ENCODE measurements at regions of chr9 and their contacts with region 1.

Region 1: DNA sequence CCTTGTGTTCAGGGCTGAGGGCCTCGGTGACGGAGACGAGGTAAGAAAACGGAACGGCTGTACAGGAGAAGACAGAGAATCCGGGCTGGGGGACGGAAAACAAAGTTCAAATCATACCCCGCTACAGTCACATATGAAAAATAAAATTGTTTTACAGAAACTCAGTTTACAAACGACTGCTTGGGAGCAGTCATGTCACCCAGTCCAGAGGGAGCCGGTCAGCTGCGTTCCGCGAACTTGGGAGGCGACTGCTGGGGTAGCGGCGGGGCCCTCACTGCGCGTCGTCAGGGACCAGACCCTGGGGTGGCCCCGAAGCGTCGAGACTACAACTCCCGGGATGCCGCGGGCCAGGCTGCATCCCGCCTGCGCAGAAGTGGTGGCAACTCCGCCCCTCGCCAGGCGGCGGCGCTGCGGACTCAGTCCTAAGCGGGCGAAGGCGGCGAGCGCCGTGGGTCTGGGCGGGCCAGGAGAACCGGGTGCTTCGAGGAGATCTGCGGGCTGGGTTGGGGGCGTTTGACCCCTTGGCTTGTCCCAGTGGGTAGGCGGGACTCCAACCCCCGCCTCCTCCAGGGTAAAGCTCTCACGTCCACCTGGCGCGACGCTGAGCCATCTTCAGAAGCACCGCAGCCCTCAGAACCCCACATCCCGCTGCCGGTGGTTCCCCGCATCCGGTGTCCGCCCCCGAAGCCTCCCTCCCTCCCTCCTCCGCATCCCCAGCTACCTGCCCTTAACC is 4.0 kb downstream of the SIT1 start:
- DNase-seq: peak; percentile 89 to 91 (median 90)
- H3K4me3 ChIP-seq: peak overlapping the region; percentile 65 to 81 (median 71)
- H3K4me3 Mint-ChIP-seq: peak overlapping the region; percentile 92 to 99
- H3K27ac ChIP-seq: peak overlapping the region; percentile 89 to 94
- H3K27ac Mint-ChIP-seq: peak overlapping the region; percentile 94 to 99 (median 98)
- H3K4me1 ChIP-seq: peaks cover 57 to 78% of the 10 kb centered on the region in 2 donors
- H3K4me1 Mint-ChIP-seq: peaks cover 71% of the 10 kb centered on the region
- H3K27me3 ChIP-seq: no peaks in the 10 kb centered on the region
- H3K27me3 Mint-ChIP-seq: peaks cover 0 to 8% (median 0%) of the 10 kb centered on the region in 3 donors
- CTCF ChIP-seq: peak; percentile 97

Region 2: DNA sequence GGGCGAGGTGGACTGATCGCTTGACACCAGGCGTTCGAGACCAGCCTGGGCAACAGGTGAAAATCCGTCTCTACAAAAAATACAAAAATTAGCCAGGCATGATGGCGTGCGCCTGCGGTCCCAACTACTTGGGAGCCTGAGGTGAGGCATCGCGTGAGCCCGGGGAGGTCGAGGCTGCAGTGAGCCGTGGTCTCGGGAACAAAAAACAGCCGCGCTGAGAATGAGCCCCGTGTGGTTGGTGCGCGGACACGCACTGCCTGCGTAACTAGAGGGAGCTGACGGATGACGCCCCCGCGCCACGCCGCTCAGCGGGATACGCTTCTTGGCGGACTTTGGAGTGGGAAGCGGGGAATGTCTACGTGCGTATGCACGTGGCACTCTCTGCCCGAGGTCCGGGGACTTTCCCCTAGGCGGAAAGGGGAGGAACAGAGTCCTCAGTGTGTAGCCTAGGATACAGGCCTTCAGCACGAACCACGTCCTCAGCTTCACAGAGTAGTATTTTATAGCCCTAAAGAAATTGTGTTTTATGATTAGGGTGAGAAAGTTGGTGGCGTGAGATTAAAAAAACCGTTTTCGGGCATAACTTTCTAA is 10.9 kb after region 1 on chr9 and contains the start of gene RMRP:
- intact Hi-C with region 1: loop called (anchors 1 kb)
- DNase-seq: peak; percentile 94 to 99 (median 95)
- H3K4me3 ChIP-seq: peak within 1 kb of the TSS; percentile 83 to 94 (median 88)
- H3K4me3 Mint-ChIP-seq: peak within 1 kb of the TSS; percentile 87 to 90
- H3K27ac ChIP-seq: peak within 1 kb of the TSS; percentile 85 to 98
- H3K27ac Mint-ChIP-seq: peak within 1 kb of the TSS; percentile 95 to 100 (median 98)
- H3K4me1 ChIP-seq: peaks cover 29 to 43% of the 10 kb centered on the region in 2 donors
- H3K4me1 Mint-ChIP-seq: peaks cover 43% of the 10 kb centered on the region
- H3K27me3 ChIP-seq: no peaks in the 10 kb centered on the region
- H3K27me3 Mint-ChIP-seq: peaks cover 0 to 8% (median 5%) of the 10 kb centered on the region in 3 donors
- CTCF ChIP-seq: no peak
- polyA plus RNA-seq, gene RMRP: 13.3 TPM in 1 of 3 donors, not detected in the others

Region 3: DNA sequence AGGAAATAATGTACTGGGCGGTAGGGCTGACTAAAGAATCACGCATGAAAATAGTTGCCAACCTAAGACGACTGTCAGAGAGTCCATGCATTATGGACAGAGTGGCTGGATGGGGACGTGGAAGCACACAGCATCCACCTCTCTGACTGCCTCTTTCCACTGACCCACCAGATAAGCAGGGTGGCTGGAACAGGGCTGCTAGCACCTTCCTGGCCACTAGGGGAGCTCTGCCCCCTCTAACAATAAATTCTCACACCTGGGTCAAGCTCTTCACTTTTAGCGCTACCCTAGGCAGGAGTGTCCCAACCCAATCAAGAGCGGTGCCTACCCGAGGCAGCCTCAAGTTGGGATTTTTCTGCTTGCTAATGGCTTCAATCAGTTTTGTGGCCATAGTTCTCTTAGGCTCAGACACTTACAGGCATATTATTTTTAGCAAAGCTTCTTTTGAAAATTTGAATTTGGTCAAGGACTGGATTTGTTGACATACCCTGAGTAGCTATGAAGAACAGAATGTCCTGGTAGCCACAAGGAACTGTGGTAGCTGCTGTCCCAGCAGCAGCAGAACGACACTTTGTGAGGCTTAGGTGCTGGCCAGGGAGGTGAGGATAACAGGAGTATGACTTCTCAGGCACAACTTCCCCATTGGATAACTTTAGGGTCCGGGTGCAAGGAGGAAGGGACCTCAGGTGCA is 50.0 kb after region 1 on chr9:
- intact Hi-C with region 1: loop called in 1 of 2 experiments (anchors 10 kb)
- DNase-seq: peak; percentile 33 to 60 (median 57)
- H3K4me3 ChIP-seq: no peak overlapping the region
- H3K4me3 Mint-ChIP-seq: no peak overlapping the region
- H3K27ac ChIP-seq: no peak overlapping the region
- H3K27ac Mint-ChIP-seq: peak overlapping the region in 4 of 7 donors; percentile 22 to 87 (median 63)
- H3K4me1 ChIP-seq: peaks cover 0 to under 1% of the 10 kb centered on the region in 2 donors
- H3K4me1 Mint-ChIP-seq: no peaks in the 10 kb centered on the region
- H3K27me3 ChIP-seq: no peaks in the 10 kb centered on the region
- H3K27me3 Mint-ChIP-seq: peaks cover 0 to 3% (median 0%) of the 10 kb centered on the region in 3 donors
- CTCF ChIP-seq: peak; percentile 93

Region 4: GRCh38 chr9:35814841-35815543 is 168.3 kb after region 1 on chr9 and contains the start of gene HINT2:
- intact Hi-C with region 1: loop called in 1 of 2 experiments (anchors 5 kb)
- DNase-seq: peak; percentile 91 to 96 (median 92)
- H3K4me3 ChIP-seq: peak within 1 kb of the TSS; percentile 78 to 90 (median 88)
- H3K4me3 Mint-ChIP-seq: peak within 1 kb of the TSS; percentile 88 to 94
- H3K27ac ChIP-seq: peak within 1 kb of the TSS; percentile 70 to 80
- H3K27ac Mint-ChIP-seq: peak within 1 kb of the TSS; percentile 84 to 95 (median 93)
- H3K4me1 ChIP-seq: peaks cover 35 to 44% of the 10 kb centered on the region in 2 donors
- H3K4me1 Mint-ChIP-seq: peaks cover 34% of the 10 kb centered on the region
- H3K27me3 ChIP-seq: no peaks in the 10 kb centered on the region
- H3K27me3 Mint-ChIP-seq: peaks cover 3 to 9% (median 5%) of the 10 kb centered on the region in 3 donors
- CTCF ChIP-seq: no peak
- polyA plus RNA-seq, gene HINT2: 19.9 to 64.5 (median 59.1) TPM

Measured in CD14-positive monocyte (primary cell).